HCT116 (cell line): ENCODE measurements at regions of chrX and their contacts with region 1.

Region 1: DNA sequence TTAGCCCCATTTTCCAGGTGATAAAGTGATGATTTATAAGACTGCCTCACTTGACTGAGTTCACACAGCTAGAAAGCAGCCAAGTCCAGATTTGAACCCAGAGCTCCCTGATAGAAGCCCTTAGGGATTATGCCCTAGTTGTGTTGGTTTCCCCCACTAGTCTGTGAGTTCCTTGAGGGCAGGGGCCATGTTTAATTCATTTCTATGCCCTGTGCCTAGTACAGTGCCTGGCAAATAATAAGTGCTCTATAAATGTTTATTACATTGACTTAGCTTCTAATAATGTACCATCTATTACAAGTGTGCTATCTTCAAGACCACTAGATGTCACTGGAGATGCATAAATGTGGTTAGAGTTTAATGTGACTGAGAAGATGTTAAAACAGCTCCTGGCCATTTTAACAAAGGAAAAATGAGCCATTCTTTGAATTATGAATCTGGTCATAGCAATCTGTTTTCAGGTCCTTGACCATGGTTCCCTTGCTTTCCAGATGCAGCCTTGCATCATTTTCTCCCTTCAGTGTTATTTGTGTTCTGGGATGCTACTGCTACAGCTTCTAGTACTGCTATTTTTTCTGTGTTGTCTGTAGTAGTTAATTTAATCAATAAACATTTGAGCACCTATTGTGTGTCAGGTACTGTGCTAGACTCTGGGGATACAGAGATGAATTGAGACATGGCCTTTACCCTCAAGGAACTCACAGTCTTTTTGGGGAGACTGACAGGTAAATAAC is 43.2 kb downstream of the SLC9A6 start:
- DNase-seq: peak; percentile 21
- ATAC-seq: peak; percentile 69
- H3K4me3 ChIP-seq: no peak overlapping the region
- H3K27ac ChIP-seq: no peak overlapping the region
- H3K4me1 ChIP-seq: no peaks in the 10 kb centered on the region
- H3K27me3 ChIP-seq: no peaks in the 10 kb centered on the region
- CTCF ChIP-seq: peak; percentile 27 to 56 (median 51); a peak in 4 of 6 replicates
- POLR2A ChIP-seq: no peak
- RAD21 ChIP-seq: peak; percentile 63

Region 2: GRCh38 chrX:136200466-136200865 is 172.0 kb after region 1 on chrX:
- CTCF ChIA-PET with region 1: interaction called, 11 read pairs
- POLR2A ChIA-PET with region 1: no interaction called
- RAD21 ChIA-PET with region 1: interaction called in 1 of 2 experiments, 5 read pairs
- intact Hi-C with region 1: loop called (anchors 2 kb)
- DNase-seq: no peak
- ATAC-seq: peak; percentile 87
- H3K4me3 ChIP-seq: no peak overlapping the region
- H3K27ac ChIP-seq: no peak overlapping the region
- H3K4me1 ChIP-seq: no peaks in the 10 kb centered on the region
- H3K27me3 ChIP-seq: no peaks in the 10 kb centered on the region
- CTCF ChIP-seq: peak; percentile 26 to 51 (median 40); a peak in 4 of 6 replicates
- POLR2A ChIP-seq: no peak
- RAD21 ChIP-seq: peak; percentile 55

Region 3: DNA sequence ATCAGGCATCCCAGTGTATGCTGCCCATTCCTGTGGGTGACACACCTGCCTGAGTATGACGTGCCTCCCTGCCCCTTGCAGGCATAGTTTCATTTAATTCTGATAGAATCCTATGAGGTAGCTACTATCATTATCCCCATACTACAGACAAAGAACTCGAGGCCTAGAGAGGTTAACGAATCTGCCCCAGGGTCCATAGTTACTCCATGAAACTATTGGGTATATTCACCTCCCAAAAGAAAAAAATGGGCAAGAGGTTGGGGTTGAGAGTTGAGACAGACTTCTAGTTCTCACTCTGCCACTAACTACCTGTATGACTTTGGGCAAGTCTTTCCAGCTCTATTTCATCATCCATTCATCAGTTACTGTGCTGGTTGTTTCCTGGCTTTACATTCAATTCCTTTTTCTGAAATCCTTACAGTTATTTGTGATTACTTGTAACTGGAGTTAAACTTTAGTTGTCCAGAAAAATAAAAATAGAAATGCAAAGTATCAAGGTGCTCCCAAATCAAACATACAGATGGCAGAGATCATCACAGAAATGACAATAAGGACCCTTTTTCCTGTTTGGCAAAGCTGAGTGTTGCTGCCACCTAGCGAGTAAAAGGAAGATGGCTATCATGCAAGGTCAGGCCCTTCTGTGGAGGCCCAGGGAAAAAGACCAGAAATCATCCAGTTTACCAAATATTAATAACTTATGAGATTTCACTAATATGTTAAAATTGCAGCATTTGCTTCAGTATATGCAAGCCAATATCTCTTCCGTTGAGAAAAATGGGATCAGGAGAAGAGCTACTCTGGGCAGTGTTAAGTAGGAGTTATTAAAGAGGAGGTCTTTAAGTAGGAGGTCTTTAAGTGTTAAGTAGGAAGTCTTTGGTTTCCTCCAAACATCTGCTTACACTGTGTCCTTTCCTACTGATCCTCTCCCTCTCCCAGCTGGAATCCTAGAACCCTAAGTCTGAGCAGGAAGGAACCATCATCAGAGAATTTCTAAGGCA is 239.9 kb after region 1 on chrX:
- CTCF ChIA-PET with region 1: interaction called, 20 read pairs
- POLR2A ChIA-PET with region 1: interaction called, 3 read pairs
- RAD21 ChIA-PET with region 1: no interaction called
- intact Hi-C with region 1: loop called (anchors 1 kb)
- DNase-seq: peak; percentile 7
- ATAC-seq: peak; percentile 76
- H3K4me3 ChIP-seq: no peak overlapping the region
- H3K27ac ChIP-seq: no peak overlapping the region
- H3K4me1 ChIP-seq: peaks cover 0 to 7% of the 10 kb centered on the region in 2 experiments; a peak in 2 of 4 replicates
- H3K27me3 ChIP-seq: no peaks in the 10 kb centered on the region
- CTCF ChIP-seq: peak; percentile 53 to 67 (median 64); a peak in 5 of 6 replicates
- POLR2A ChIP-seq: no peak
- RAD21 ChIP-seq: peak; percentile 75

Region 4: GRCh38 chrX:136431625-136432024 is 403.2 kb after region 1 on chrX:
- CTCF ChIA-PET with region 1: no interaction called
- POLR2A ChIA-PET with region 1: no interaction called
- RAD21 ChIA-PET with region 1: no interaction called
- intact Hi-C with region 1: no loop called
- DNase-seq: no peak
- ATAC-seq: no peak
- H3K4me3 ChIP-seq: no peak overlapping the region
- H3K27ac ChIP-seq: no peak overlapping the region
- H3K4me1 ChIP-seq: no peaks in the 10 kb centered on the region
- H3K27me3 ChIP-seq: no peaks in the 10 kb centered on the region
- CTCF ChIP-seq: no peak
- POLR2A ChIP-seq: no peak
- RAD21 ChIP-seq: no peak

Region 5: GRCh38 chrX:136577552-136577951 is 549.1 kb after region 1 on chrX:
- CTCF ChIA-PET with region 1: no interaction called
- POLR2A ChIA-PET with region 1: no interaction called
- RAD21 ChIA-PET with region 1: no interaction called
- intact Hi-C with region 1: loop called (anchors 1 kb)
- DNase-seq: peak; percentile 24
- ATAC-seq: peak; percentile 99
- H3K4me3 ChIP-seq: no peak overlapping the region
- H3K27ac ChIP-seq: no peak overlapping the region
- H3K4me1 ChIP-seq: 0 out of 4 replicates have a peak, but pooled peaks cover 0 to 4% of the 10 kb centered on the region in 2 experiments
- H3K27me3 ChIP-seq: no peaks in the 10 kb centered on the region
- CTCF ChIP-seq: peak; percentile 41 to 80 (median 61); a peak in 5 of 6 replicates
- POLR2A ChIP-seq: no peak
- RAD21 ChIP-seq: peak; percentile 61